ENCODE measurements at regions of chr5 and their contacts with region 1.

Region 1: GRCh38 chr5:79020861-79021561 is 35.9 kb upstream of the ARSB start:
- DNase-seq: peak; percentile 66
- H3K4me3 Mint-ChIP-seq: no peak overlapping the region
- H3K27ac Mint-ChIP-seq: no peak overlapping the region
- H3K4me1 Mint-ChIP-seq: peaks cover 7% of the 10 kb centered on the region
- H3K27me3 Mint-ChIP-seq: peaks cover 43% of the 10 kb centered on the region

Region 2: DNA sequence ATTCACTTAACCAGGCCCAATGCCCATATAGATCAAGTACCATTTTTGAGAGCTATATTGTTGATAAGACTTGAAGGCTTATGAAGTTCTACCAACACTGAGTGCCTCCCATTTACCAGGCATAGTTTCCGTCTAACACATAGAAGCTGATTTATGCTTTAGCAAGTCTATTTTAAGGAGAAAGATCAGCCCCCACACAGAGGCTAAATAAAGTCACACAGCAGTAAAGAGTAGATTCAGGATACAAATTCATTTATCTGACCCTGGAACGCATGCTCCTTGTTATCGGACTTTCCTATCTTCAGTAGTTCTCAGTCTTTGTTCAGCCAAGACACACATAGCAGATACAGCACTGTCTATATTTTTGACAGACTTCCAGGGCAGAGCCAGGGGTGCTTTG is 14.2 kb after region 1 on chr5:
- CTCF ChIA-PET with region 1: interaction called, 18 read pairs
- POLR2A ChIA-PET with region 1: no interaction called
- intact Hi-C with region 1: no loop called
- DNase-seq: no peak
- H3K4me3 Mint-ChIP-seq: no peak overlapping the region
- H3K27ac Mint-ChIP-seq: no peak overlapping the region
- H3K4me1 Mint-ChIP-seq: no peaks in the 10 kb centered on the region
- H3K27me3 Mint-ChIP-seq: no peaks in the 10 kb centered on the region

Region 3: GRCh38 chr5:79042188-79042587 is 21.2 kb after region 1 on chr5:
- CTCF ChIA-PET with region 1: interaction called, 12 read pairs
- POLR2A ChIA-PET with region 1: no interaction called
- intact Hi-C with region 1: no loop called
- DNase-seq: no peak
- H3K4me3 Mint-ChIP-seq: no peak overlapping the region
- H3K27ac Mint-ChIP-seq: no peak overlapping the region
- H3K4me1 Mint-ChIP-seq: no peaks in the 10 kb centered on the region
- H3K27me3 Mint-ChIP-seq: no peaks in the 10 kb centered on the region

Region 4: GRCh38 chr5:79048437-79048836 is 27.4 kb after region 1 on chr5:
- CTCF ChIA-PET with region 1: interaction called, 12 read pairs
- POLR2A ChIA-PET with region 1: no interaction called
- intact Hi-C with region 1: no loop called
- DNase-seq: no peak
- H3K4me3 Mint-ChIP-seq: no peak overlapping the region
- H3K27ac Mint-ChIP-seq: no peak overlapping the region
- H3K4me1 Mint-ChIP-seq: no peaks in the 10 kb centered on the region
- H3K27me3 Mint-ChIP-seq: peaks cover 6% of the 10 kb centered on the region

Region 5: GRCh38 chr5:79109527-79110492 is 88.8 kb after region 1 on chr5:
- CTCF ChIA-PET with region 1: interaction called, 44 read pairs
- POLR2A ChIA-PET with region 1: no interaction called
- intact Hi-C with region 1: loop called (anchors 2 kb)
- DNase-seq: peak; percentile 50
- H3K4me3 Mint-ChIP-seq: no peak overlapping the region
- H3K27ac Mint-ChIP-seq: no peak overlapping the region
- H3K4me1 Mint-ChIP-seq: no peaks in the 10 kb centered on the region
- H3K27me3 Mint-ChIP-seq: peaks cover 58% of the 10 kb centered on the region

Region 6: DNA sequence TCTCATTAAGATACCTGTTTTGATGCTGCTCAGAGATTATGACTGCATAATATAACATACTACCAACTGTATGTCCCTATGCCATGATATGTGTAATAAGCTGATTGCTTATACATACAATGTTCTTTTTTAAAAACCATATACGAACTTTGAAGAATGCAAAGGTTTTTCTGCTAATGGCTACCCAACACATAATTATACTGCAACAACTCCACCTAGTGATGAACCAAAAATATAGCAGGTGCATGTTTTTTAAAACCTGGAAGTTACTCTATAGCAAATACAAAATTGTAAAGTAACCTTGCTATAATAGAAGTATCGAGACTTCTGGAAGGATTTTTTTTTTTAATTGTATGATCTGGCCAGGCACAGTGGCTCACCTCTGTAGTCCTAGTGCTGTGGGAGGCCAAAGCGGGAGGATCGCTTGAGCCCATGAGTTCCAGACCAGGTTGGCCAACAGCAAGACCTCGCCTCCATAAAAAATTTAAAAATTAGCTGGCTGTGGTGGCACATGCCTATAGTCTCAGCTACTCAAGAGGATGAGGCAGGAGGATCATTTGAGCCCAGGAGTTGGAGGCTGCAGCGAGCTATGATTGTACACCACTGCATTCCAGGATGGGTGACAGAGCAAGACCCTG is 443.8 kb after region 1 on chr5:
- CTCF ChIA-PET with region 1: interaction called, 58 read pairs
- POLR2A ChIA-PET with region 1: no interaction called
- intact Hi-C with region 1: loop called (anchors 2 kb)
- DNase-seq: no peak
- H3K4me3 Mint-ChIP-seq: no peak overlapping the region
- H3K27ac Mint-ChIP-seq: no peak overlapping the region
- H3K4me1 Mint-ChIP-seq: no peaks in the 10 kb centered on the region
- H3K27me3 Mint-ChIP-seq: peaks cover 6% of the 10 kb centered on the region

Region 7: DNA sequence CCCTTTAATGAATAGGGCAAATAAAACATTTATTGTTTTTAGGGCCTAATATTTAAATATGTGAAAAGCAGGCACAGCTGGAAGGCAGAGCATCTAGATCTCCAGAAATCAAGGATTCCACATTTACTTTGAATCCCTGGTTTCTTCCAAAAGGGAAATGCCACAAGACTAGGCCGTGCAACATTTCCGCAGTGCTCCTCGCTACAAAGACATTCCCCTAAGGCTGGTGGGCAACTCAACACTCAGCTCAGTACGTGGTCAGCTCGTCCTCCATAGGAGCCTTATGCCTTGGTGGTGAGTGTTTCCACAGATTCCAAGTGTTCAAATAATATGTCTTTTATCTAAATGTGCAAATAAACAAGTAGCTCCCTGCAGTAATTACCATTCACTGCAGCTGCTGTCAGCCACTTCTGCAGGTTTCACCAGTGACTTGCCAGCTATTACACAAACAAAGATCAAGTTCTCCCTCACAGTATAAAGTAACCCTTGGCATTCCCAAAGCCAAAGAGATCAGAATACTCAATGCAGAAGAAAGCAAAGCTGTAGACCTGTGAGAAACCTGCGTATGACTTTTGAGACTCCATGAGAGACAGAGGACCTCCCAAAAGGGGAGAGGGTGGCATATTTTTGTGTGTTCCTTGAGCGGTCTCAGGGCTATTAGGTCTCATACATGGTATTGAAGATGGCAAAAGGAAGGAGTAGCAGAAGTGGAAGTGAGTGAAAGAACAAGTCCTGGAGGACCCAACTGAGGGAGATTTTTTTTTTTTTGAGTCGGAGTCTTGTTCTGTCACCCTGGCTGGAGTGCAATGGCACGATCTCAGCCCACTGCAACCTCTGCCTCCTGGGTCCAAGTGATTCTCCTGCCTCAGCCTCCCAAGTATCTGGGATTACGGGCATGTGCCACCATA is 553.2 kb after region 1 on chr5:
- CTCF ChIA-PET with region 1: no interaction called
- POLR2A ChIA-PET with region 1: no interaction called
- intact Hi-C with region 1: no loop called
- DNase-seq: no peak
- H3K4me3 Mint-ChIP-seq: no peak overlapping the region
- H3K27ac Mint-ChIP-seq: no peak overlapping the region
- H3K4me1 Mint-ChIP-seq: no peaks in the 10 kb centered on the region
- H3K27me3 Mint-ChIP-seq: peaks cover 8% of the 10 kb centered on the region